Endothelial cell of umbilical vein (primary cell): ENCODE measurements at regions of chr18 and their contacts with region 1.

Region 1: DNA sequence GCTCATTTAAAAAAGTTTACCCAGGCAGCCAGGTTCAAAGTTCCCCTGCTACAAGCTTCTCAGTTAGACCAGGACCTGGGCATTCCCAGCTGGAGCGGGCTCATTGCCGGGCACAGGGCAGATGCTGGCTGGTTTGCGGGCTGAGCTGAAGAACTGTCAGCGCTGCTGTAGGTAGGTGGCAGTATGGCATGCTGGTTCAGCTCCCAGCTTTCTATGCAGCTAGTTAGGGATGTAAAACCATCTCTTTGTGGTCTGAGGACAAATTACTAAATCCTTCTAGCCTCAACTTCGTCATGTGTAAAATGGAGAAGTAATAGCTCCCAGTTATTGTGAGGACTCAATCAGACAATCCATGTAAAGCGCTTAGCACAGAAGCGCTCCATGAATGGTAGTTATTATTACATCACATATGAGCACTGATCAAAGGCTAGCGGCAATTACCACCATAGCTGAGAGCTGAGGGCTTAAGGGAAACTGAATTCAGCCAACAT is 2.4 kb upstream of the LDLRAD4 start:
- DNase-seq: peak; percentile 81
- H3K4me3 ChIP-seq: no peak overlapping the region
- H3K27ac ChIP-seq: no peak overlapping the region
- H3K4me1 ChIP-seq: peaks cover 6% of the 10 kb centered on the region
- H3K27me3 ChIP-seq: peaks cover 28 to 62% of the 10 kb centered on the region in 2 experiments
- CTCF ChIP-seq: peak; percentile 66 to 80
- POLR2A ChIP-seq: no peak

Region 2: DNA sequence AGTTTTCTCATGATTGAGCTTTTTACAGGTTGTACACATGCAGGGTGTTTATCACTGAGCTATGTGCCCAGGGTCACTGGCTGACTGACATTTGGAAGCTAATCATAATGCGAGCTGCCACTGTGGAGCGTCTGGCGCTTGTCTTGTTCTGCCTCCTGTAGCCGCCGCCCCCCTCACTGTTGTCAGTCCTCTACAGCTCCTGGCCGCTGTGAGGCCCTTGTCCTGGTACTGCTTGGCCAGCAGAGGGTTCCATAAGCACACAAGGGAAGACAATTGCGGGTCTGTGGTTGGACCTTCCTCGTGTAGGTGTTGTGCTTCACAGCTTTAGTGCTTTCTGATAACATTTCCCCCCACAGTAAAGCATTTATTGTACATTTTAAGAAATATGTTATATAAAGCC is 103.2 kb before region 1 on chr18:
- CTCF ChIA-PET with region 1: no interaction called
- POLR2A ChIA-PET with region 1: no interaction called
- dilution Hi-C with region 1: no loop called
- intact Hi-C with region 1: no loop called
- DNase-seq: peak; percentile 64
- H3K4me3 ChIP-seq: no peak overlapping the region
- H3K27ac ChIP-seq: no peak overlapping the region
- H3K4me1 ChIP-seq: no peaks in the 10 kb centered on the region
- H3K27me3 ChIP-seq: no peaks in the 10 kb centered on the region
- CTCF ChIP-seq: peak; percentile 22 to 54
- POLR2A ChIP-seq: no peak

Region 3: GRCh38 chr18:13260197-13260934 is 44.2 kb after region 1 on chr18:
- CTCF ChIA-PET with region 1: no interaction called
- POLR2A ChIA-PET with region 1: no interaction called
- dilution Hi-C with region 1: no loop called
- intact Hi-C with region 1: loop called (anchors 2 kb)
- DNase-seq: peak; percentile 75
- H3K4me3 ChIP-seq: no peak overlapping the region
- H3K27ac ChIP-seq: peak overlapping the region; percentile 38
- H3K4me1 ChIP-seq: peaks cover 22% of the 10 kb centered on the region
- H3K27me3 ChIP-seq: peaks cover 0 to 5% of the 10 kb centered on the region in 2 experiments
- CTCF ChIP-seq: no peak
- POLR2A ChIP-seq: no peak

Region 4: DNA sequence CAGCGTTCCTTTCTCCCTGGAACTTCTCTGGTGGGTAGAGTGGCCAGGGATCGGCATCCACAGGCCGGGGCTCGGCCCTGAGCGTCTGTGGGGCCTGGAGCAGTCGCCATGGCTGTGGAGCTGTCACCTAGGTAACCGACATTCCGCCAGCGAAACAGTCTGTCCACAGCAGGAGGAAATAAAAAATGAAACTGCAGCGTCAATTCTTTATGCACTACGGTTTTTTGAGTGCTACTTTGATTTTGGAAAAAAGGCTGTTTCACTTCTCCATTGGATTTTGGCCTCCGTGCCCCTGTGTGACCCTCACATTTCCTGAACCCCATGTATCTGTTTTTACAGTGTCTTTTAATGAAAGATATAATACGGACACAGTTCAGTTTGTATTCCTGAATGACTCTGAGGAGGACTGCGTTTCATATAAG is 165.8 kb after region 1 on chr18:
- CTCF ChIA-PET with region 1: interaction called, 5 read pairs
- POLR2A ChIA-PET with region 1: no interaction called
- dilution Hi-C with region 1: no loop called
- intact Hi-C with region 1: loop called (anchors 2 kb)
- DNase-seq: peak; percentile 71
- H3K4me3 ChIP-seq: peak overlapping the region in 1 of 3 experiments; percentile 49
- H3K27ac ChIP-seq: peak overlapping the region; percentile 94
- H3K4me1 ChIP-seq: peaks cover 31% of the 10 kb centered on the region
- H3K27me3 ChIP-seq: no peaks in the 10 kb centered on the region
- CTCF ChIP-seq: no peak
- POLR2A ChIP-seq: no peak

Region 5: GRCh38 chr18:13464432-13465123 is 248.4 kb after region 1 on chr18:
- CTCF ChIA-PET with region 1: interaction called, 4 read pairs
- POLR2A ChIA-PET with region 1: no interaction called
- dilution Hi-C with region 1: no loop called
- intact Hi-C with region 1: loop called (anchors 1 kb)
- DNase-seq: peak; percentile 94
- H3K4me3 ChIP-seq: peak overlapping the region in 1 of 3 experiments; percentile 39
- H3K27ac ChIP-seq: peak overlapping the region; percentile 98
- H3K4me1 ChIP-seq: peaks cover 24% of the 10 kb centered on the region
- H3K27me3 ChIP-seq: no peaks in the 10 kb centered on the region
- CTCF ChIP-seq: no peak
- POLR2A ChIP-seq: peak; percentile 54

Region 6: GRCh38 chr18:13530879-13531387 is 314.8 kb after region 1 on chr18:
- CTCF ChIA-PET with region 1: interaction called, 195 read pairs
- POLR2A ChIA-PET with region 1: no interaction called
- dilution Hi-C with region 1: no loop called
- intact Hi-C with region 1: loop called (anchors 1 kb)
- DNase-seq: peak; percentile 79
- H3K4me3 ChIP-seq: no peak overlapping the region
- H3K27ac ChIP-seq: no peak overlapping the region
- H3K4me1 ChIP-seq: no peaks in the 10 kb centered on the region
- H3K27me3 ChIP-seq: peaks cover 0 to 5% of the 10 kb centered on the region in 2 experiments
- CTCF ChIP-seq: peak; percentile 59 to 75
- POLR2A ChIP-seq: no peak